BJ (cell line): ENCODE measurements at regions of chr13 and their contacts with region 1.

Region 1: DNA sequence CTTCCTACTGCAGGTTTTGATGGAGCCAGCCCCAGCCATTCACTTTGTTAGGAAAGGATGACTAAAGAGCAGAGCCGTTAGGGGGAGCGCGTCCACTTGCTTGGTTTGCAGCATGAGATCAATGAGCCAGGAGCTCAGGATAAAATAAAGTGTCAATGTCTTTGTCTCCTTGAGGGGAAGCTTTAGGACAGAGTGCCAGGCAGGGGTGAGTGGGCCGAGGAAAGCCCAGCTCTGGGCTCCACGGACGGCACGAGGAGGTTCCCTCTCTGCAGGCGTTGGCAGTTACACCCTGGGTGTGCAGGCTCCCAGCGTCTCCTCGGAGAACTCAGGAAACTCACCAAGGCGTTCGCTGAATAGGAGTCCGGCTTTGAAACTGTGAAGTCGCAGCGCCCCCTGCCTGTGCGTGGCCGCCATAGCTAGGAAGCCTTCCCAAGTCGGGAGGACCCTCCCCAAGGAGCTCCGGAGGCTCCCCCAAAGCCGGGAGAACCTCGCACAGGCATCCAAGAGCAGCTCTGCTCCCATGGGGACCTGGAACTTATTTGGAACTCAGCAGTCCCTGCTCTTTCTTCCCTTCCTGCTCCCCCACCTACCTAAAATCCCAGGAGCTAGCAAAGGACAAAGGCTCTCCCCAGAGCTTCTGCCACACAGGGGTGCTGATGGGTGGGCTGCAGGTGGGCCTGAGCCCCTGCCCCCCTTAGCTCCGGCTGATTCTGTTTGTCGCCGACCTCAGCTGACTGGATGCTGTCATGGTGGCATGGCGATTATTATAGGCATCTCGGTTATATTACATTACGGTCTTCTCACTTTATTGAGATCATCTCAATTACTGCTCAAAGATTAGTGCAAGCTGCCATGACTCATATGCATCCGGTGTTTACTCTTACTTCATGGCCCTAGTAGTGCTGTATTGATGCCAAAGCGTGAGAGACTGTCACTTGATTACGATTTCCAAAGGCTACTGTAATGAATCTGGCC is 34.4 kb downstream of the GSX1 start:
- DNase-seq: peak; percentile 16
- H3K4me3 ChIP-seq: no peak overlapping the region
- H3K27me3 ChIP-seq: peaks cover 7% of the 10 kb centered on the region
- CTCF ChIP-seq: peak; percentile 91

Region 2: DNA sequence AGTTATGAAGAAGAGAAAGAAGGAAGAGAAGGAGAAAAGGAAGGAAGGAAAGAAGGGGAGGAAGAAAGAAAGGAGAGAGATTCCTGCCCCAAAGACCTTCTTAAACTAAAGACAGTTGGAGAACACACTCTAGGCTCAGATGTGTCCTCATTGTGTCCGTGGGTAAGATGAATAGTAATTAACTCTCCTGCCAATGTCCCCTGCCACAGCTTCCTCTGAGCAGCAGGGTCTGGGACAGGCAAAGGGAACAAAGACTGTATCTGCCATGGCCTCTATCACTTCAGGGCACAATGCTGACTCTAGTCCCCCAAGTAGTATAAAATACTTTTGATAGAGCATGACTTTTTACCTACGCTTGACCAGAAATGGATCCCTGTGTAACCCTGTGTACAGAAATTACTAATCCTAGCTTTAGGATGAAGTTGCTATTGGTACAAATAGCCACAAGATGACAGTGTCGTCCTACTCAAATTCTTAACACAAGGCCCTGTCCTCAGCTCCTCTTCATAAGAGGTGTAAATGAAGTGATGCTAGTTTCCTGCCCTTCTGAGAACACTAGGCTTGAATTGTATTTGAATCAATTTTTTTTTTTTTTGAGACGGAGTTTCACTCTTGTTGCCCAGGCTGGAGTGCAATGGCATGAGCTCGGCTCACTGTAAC is 879.9 kb before region 1 on chr13:
- CTCF ChIA-PET with region 1: interaction called, 25 read pairs
- POLR2A ChIA-PET with region 1: interaction called, 15 read pairs
- DNase-seq: no peak
- H3K4me3 ChIP-seq: no peak overlapping the region
- H3K27me3 ChIP-seq: 0 out of 2 replicates have a peak, but pooled peaks cover 1% of the 10 kb centered on the region
- CTCF ChIP-seq: peak; percentile 80

Region 3: GRCh38 chr13:27374650-27375049 is 452.0 kb before region 1 on chr13:
- CTCF ChIA-PET with region 1: interaction called, 168 read pairs
- POLR2A ChIA-PET with region 1: no interaction called
- DNase-seq: peak; percentile 26
- H3K4me3 ChIP-seq: no peak overlapping the region
- H3K27me3 ChIP-seq: peaks cover 9% of the 10 kb centered on the region
- CTCF ChIP-seq: peak; percentile 83

Region 4: DNA sequence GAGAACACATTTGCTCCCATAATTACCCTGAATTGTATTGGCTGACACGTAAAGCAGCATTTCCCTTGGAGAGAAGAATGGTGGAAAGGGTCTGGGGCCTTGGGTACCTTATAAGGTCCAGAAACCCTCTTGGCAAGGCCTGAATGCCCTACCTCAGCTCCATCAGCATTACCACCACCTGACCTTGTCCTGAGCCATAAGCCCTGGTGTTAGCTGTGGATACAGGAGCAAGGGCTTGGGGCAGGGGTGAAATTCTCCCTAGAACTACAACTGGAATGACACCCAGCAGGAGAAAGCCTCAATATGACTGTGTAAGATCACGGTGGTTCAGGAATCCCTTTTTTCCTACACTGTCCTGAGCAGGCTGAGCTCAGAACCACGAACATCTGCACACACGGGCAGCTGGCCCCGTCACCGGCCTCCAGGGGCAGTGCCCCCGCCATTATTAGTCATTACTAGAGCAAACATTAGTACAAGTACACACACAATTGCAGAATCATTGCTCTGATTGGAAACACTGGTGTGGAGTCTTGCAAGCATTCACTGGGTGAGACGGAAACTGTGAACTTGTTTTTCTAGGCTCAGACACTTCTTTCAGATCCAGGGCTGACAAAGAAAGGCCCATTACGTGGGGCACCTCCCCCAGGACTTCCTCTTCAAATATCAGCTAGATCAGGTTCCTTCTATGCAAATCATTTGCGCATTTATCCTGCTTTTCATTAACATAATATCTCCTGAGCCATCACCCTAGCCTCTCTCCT is 349.5 kb before region 1 on chr13:
- CTCF ChIA-PET with region 1: interaction called, 20 read pairs
- POLR2A ChIA-PET with region 1: no interaction called
- DNase-seq: no peak
- H3K4me3 ChIP-seq: no peak overlapping the region
- H3K27me3 ChIP-seq: peaks cover 6% of the 10 kb centered on the region
- CTCF ChIP-seq: no peak

Region 5: GRCh38 chr13:27770809-27771208 is 55.9 kb before region 1 on chr13:
- CTCF ChIA-PET with region 1: interaction called, 10 read pairs
- POLR2A ChIA-PET with region 1: no interaction called
- DNase-seq: no peak
- H3K4me3 ChIP-seq: no peak overlapping the region
- H3K27me3 ChIP-seq: peaks cover 5% of the 10 kb centered on the region; the same call in 1 of the 2 replicates
- CTCF ChIP-seq: peak; percentile 49

Region 6: DNA sequence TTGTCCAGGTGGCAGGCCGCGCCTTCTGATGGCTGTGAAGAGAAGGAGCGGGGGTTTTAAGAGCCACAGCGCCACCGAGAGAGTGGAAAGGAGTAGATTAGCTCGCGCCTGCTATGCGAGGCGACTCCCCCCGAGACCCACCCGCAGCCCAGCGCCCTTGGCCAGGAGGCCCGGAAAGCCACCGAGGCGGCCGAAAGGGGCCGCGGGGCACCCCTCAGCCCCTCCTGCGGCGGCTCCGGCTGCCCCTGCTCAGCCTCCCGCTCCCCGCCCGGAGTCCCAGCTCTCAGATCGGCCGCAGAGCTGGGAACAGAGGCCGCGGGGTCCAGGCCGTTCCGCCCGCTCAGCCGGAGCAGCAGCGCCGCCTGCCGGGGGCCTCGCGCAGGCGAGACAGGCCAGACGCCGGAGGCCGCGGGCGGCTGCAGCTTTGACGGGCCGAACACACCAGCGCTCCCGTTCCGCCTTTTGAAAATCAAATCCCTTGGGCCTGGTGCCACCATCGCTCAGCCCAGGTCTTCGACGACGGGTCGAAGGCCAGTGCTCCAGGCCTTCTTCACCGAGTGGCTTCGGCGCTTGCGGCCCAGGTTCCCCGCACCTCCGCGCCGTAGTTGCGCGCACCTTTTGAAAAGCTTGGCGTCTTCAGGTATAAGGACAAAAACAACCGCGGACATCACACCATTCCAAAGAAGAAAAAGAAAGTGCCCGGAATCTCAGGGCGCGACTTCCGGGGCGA is 127.2 kb after region 1 on chr13:
- CTCF ChIA-PET with region 1: interaction called, 27 read pairs
- POLR2A ChIA-PET with region 1: no interaction called
- DNase-seq: no peak
- H3K4me3 ChIP-seq: peak overlapping the region; percentile 43
- H3K27me3 ChIP-seq: peaks cover 13% of the 10 kb centered on the region
- CTCF ChIP-seq: peak; percentile 55